ENCODE measurements at regions of chr5 and their contacts with region 1.

Region 1: DNA sequence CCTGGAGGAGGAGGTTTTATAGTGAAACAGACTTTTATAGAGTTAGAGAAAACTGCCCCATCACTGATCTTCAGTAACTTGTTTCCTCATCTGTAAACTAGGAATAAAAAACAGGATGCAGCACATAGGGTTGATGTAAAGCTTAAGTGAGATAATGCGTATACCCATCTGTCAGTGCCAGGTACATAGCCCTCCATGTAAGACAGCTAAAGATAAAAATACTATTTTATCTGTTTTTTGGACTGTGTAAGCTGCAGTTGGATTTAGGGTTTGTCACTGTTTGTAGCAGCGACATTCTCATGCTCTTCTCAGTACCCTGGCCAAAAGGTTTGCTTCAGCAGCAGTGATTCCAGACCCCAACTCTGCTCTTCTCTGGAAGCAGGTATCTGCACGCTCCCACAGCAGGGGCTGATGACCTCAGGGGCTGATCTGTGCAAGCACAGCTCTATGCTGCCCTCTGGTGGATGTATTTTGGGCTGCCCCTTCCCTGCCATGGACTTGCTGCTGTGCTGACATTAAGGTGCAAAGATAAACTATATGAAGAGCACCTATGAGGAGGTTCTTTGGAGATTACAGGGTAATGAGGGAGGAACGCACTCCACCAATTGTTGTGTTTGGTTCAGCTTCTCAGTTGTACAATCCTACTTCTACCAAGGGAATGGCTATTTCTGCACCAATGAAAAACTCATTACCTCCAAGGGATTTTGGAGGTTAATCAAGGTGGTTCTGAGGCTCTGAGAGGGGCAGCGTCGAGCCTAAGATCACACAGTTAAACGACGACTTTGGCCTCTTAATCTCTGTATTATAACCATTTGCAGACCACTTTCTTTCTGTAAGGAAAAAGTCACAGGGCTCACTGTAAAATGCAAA is 13.1 kb downstream of the HMHB1 start:
- DNase-seq: peak; percentile 61 to 96 (median 84)

Region 2: GRCh38 chr5:142922223-142922952 is 902.7 kb before region 1 on chr5:
- intact Hi-C with region 1: loop called (anchors 5 kb)
- DNase-seq: no peak

Region 3: DNA sequence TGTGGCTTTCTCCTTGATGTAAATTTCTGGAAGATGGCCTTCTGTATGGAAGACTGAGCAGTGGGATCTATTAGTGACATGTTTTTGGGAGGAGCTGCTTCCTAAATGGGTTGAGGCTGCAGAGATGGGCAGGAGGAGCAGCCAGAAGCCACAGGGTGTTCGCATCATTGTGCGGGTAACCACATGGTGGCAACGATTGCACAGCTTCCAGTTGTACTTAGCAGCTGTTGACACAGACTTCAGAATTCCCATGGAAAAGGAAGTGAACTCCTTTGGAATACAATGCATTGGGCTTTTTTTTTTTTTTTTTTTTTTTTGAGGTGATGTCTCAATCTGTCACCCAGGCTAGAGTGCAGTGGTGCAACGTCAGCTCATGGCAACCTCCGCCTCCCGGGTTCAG is 718.9 kb before region 1 on chr5:
- intact Hi-C with region 1: loop called (anchors 10 kb)
- DNase-seq: peak in 7 of 10 donors; percentile 35 to 86 (median 56)

Region 4: GRCh38 chr5:143403593-143404415 is 421.3 kb before region 1 on chr5 and contains the start of gene NR3C1:
- intact Hi-C with region 1: loop called (anchors 2 kb)
- DNase-seq: peak; percentile 67 to 97 (median 80)

Region 5: GRCh38 chr5:144142139-144142823 is 317.2 kb after region 1 on chr5:
- intact Hi-C with region 1: loop called (anchors 10 kb)
- DNase-seq: no peak

Measured in posterior cingulate gyrus (tissue), 11 donors.